ENCODE measurements at regions of chr9 and their contacts with region 1.

Region 1: DNA sequence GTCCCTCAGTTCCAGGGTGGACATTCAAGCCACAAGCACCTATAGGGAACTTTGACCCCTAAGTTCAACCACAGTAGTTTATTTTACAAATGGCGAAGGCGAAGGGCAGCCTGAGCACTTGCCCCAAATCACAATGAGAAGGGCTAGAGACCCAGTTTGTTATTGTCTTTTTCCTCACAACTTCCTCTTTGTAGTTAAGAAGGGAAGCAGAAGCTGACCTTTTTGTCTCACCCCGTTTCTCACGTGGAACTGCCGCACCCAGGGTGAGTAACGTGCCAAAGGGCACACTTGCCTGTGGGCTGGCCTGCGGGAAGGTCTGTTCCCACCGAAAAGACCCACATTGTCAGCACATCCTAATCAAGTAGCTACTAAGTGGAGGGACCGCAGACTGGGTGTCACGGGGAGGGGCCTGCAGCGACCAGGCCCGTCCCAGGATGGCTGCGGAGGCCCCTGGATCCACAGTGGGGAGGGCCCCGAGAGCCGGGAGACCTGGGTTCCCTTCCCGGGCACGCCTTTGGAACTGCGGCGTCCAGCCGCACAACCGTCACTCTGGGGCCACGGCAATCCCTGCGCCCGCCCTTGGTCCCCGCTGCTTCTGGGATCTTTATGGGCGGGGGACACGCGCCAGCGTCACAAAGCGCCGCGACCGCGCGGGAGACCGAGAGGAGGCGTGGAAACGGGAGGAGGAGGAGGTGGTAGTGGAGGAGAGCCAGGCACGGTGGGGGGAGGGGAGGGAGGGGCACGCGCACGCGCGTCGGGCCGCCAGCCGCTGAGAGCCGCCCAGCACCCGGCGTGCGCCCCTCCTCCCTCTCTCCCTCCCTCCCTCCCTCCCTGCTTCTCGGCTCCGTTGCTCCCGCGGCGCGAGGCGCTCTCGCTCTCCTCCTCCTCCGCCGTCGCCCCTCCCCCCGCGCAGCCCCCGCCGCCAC is at the start of gene UBE2R2:
- DNase-seq: peak; percentile 86 to 98 (median 91)
- ATAC-seq: peak; percentile 79
- H3K4me3 ChIP-seq: peak within 1 kb of the TSS; percentile 85 to 93
- H3K4me3 Mint-ChIP-seq: peak within 1 kb of the TSS; percentile 89
- H3K27ac ChIP-seq: peak within 1 kb of the TSS; percentile 92 to 94
- H3K27ac Mint-ChIP-seq: peak within 1 kb of the TSS; percentile 98
- H3K4me1 ChIP-seq: peaks cover 23% of the 10 kb centered on the region
- H3K4me1 Mint-ChIP-seq: peaks cover 50% of the 10 kb centered on the region
- H3K27me3 ChIP-seq: no peaks in the 10 kb centered on the region
- H3K27me3 Mint-ChIP-seq: no peaks in the 10 kb centered on the region
- CTCF ChIP-seq: no peak
- total RNA-seq, gene UBE2R2: 20.0 to 20.1 TPM

Region 2: DNA sequence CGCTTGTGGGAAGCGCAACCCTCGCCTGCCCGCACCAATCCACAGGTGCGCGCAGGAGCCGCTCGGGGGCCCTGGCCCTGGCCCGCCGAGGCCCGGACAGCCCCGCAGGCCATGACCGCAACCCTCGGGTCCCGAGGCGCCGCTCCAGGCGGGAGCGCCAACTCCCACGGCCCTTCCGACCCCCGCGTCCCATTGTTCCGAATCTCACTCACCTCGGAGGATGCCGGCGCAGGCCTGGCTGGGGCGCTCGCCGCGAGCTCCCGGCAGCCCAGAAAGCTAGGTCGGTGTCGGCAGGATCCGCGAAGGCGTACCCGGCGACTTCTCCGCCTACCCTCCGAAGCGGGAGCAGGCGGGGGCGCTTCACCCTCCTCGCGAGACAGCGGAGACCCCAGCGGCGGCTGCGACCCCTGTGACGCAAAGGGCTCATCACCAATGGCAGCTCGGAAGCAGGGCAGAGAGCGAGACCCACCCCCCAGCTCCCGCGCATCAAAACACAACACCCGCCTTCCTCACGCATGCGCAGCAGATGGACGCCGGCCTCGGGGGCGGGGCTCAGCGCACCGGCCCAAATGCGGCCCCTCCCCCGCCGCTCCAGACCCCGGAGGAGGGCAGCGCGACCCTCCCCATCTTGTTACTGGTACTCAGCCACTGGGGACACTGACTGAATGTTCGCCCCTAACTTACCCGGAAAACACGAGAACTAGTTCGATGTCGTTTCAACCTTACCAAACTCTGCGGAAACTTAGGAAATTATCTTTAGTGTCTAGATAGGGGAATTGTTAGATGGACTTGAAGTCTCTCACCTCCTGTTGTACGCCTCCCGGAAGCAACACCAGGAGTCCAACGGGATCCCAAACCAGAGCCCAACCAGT is 1265.8 kb before region 1 on chr9:
- CTCF ChIA-PET with region 1: no interaction called
- POLR2A ChIA-PET with region 1: no interaction called
- intact Hi-C with region 1: loop called in 1 of 2 experiments (anchors 5 kb)
- DNase-seq: peak; percentile 90 to 99 (median 96)
- ATAC-seq: peak; percentile 85
- H3K4me3 ChIP-seq: peak overlapping the region; percentile 85 to 87
- H3K4me3 Mint-ChIP-seq: peak overlapping the region; percentile 94
- H3K27ac ChIP-seq: peak overlapping the region; percentile 91 to 97
- H3K27ac Mint-ChIP-seq: peak overlapping the region; percentile 99
- H3K4me1 ChIP-seq: peaks cover 23% of the 10 kb centered on the region
- H3K4me1 Mint-ChIP-seq: peaks cover 57% of the 10 kb centered on the region
- H3K27me3 ChIP-seq: no peaks in the 10 kb centered on the region
- H3K27me3 Mint-ChIP-seq: no peaks in the 10 kb centered on the region
- CTCF ChIP-seq: peak; percentile 19

Region 3: GRCh38 chr9:33852216-33852826 is 35.7 kb after region 1 on chr9:
- CTCF ChIA-PET with region 1: interaction called, 73 read pairs
- POLR2A ChIA-PET with region 1: interaction called, 4 read pairs
- intact Hi-C with region 1: loop called (anchors 1 kb)
- DNase-seq: peak; percentile 22 to 76 (median 61)
- ATAC-seq: peak; percentile 68
- H3K4me3 ChIP-seq: no peak overlapping the region
- H3K4me3 Mint-ChIP-seq: no peak overlapping the region
- H3K27ac ChIP-seq: no peak overlapping the region
- H3K27ac Mint-ChIP-seq: peak overlapping the region; percentile 53
- H3K4me1 ChIP-seq: peaks cover 7% of the 10 kb centered on the region
- H3K4me1 Mint-ChIP-seq: peaks cover 51% of the 10 kb centered on the region
- H3K27me3 ChIP-seq: no peaks in the 10 kb centered on the region
- H3K27me3 Mint-ChIP-seq: no peaks in the 10 kb centered on the region
- CTCF ChIP-seq: peak; percentile 60

Region 4: DNA sequence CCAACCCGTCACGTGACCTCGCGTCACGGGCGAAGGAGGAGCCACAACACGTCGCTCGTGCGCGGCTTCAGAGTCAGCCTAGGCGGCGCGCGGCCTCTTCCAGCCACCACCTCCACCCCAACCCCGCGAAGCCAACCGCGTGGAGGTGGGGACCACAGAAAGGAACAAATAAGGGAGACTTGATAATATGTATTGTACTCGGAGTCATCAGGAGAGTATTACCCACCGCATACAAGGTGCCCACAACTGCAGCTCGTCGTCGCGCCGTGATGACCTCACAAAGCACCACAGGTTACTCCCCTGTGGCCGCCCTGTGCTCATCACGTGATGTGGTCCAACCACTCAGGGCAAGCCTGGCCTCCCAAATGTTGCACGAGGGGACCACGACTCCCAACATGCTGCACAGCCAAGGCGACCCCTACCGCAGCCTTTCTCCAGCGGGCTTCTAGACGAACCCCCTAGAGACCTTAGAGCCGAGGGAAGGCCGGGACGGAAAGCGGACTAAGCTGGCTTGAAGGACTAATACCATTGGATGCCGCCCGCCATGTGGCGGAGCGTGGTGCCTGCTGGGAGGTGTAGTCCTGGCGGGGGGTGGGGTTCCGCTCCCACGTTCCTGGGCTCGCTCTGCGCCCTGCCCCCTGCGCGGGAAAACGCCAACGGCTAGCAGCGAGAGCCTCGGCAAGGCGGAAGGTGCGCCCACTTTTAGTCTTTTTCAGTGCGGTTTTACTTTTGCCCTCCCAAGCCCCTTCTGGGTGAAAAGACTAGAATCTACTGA is 232.5 kb after region 1 on chr9:
- CTCF ChIA-PET with region 1: no interaction called
- POLR2A ChIA-PET with region 1: no interaction called
- intact Hi-C with region 1: loop called (anchors 1 to 2 kb)
- DNase-seq: peak; percentile 92 to 99 (median 97)
- ATAC-seq: peak; percentile 81
- H3K4me3 ChIP-seq: peak overlapping the region; percentile 76 to 79
- H3K4me3 Mint-ChIP-seq: peak overlapping the region; percentile 97
- H3K27ac ChIP-seq: peak overlapping the region; percentile 87 to 95
- H3K27ac Mint-ChIP-seq: peak overlapping the region; percentile 100
- H3K4me1 ChIP-seq: peaks cover 23% of the 10 kb centered on the region
- H3K4me1 Mint-ChIP-seq: peaks cover 29% of the 10 kb centered on the region
- H3K27me3 ChIP-seq: no peaks in the 10 kb centered on the region
- H3K27me3 Mint-ChIP-seq: no peaks in the 10 kb centered on the region
- CTCF ChIP-seq: no peak

Region 5: DNA sequence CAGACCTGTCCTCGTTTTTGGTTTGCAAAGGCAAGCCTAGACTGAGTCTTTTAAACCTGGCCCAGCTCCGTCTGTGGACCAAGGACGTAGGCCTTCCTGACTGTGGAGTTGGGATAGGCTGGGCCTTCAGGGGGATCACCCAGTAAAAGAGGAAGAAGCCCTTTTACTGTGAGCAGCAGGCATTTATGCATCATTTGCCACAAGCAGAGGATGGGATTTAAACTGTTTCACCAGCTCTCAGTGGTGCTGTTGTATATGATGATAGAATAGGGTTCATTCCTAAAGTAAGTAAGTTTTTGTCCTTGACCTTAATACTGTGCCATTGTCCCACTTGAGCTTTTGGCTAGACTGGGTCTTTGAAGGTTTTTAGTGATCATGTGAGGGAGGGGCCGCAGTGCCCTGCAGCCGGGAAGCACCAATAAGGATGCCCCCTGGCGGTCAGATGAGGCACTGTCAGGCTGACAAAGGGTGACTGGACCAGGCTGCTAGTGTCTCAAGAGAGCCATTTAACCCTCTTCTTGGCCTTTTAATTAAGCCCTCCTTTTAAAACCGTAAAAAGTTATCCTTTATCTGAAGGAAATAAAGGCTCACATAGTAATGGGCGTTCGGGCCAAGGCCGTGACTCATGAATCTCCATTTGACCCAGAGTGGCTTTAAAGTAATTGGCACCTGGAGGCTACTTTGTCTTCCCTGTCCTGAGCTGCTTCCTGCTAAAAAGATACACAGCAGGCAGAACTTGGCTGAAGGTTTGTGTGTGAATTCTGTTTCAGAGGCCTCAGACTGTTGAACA is 436.3 kb after region 1 on chr9:
- CTCF ChIA-PET with region 1: interaction called, 3 read pairs
- POLR2A ChIA-PET with region 1: no interaction called
- intact Hi-C with region 1: loop called in 1 of 2 experiments (anchors 5 kb)
- DNase-seq: peak in 8 of 9 experiments; percentile 29 to 79 (median 66)
- ATAC-seq: peak; percentile 75
- H3K4me3 ChIP-seq: no peak overlapping the region
- H3K4me3 Mint-ChIP-seq: no peak overlapping the region
- H3K27ac ChIP-seq: no peak overlapping the region
- H3K27ac Mint-ChIP-seq: peak overlapping the region; percentile 52
- H3K4me1 ChIP-seq: peaks cover 23% of the 10 kb centered on the region
- H3K4me1 Mint-ChIP-seq: peaks cover 21% of the 10 kb centered on the region
- H3K27me3 ChIP-seq: no peaks in the 10 kb centered on the region
- H3K27me3 Mint-ChIP-seq: no peaks in the 10 kb centered on the region
- CTCF ChIP-seq: peak; percentile 92

Region 6: DNA sequence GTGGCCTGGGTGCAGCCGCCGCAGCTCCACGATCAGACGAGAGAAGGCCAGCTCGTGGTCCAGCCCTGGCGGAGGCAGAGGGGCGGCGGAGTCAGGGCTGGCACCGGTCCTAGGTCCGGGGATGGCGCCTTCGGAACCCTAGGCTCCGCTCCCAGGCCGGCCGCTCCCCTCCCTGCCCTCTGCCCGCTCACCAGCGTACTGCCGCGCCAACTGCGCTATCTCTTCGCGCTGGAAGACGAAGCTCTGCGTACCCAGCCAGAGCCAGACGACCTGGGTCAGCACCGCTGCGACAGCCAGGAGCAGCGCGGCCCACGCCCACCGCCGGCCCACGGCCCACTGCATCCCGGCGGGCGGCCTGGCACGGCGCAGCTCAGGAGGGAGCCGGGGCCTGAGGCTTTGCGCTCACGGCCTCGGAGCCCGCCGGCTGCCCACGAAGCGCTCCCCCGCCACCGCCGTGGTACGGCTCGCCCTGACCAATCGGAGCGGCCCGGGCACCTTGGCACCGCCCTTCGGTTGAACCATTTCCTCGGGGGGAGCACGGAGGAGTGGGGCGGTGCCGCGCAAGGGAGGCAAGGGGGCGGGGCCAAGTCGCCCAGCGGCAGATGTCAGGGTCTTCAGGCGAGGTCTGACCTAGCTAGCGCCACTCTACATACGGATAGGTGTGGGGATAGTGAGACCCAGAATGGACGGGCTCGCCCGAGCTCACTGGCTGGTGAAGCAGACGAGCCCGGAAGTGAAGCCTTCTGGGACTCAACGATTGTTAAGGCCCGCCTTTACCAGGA is 821.0 kb after region 1 on chr9 and contains the start of gene SIGMAR1:
- CTCF ChIA-PET with region 1: no interaction called
- POLR2A ChIA-PET with region 1: no interaction called
- intact Hi-C with region 1: loop called in 1 of 2 experiments (anchors 5 kb)
- DNase-seq: peak; percentile 85 to 96 (median 93)
- ATAC-seq: peak; percentile 95
- H3K4me3 ChIP-seq: peak within 1 kb of the TSS; percentile 63 to 69
- H3K4me3 Mint-ChIP-seq: peak within 1 kb of the TSS; percentile 86
- H3K27ac ChIP-seq: peak within 1 kb of the TSS; percentile 55 to 86
- H3K27ac Mint-ChIP-seq: peak within 1 kb of the TSS; percentile 86
- H3K4me1 ChIP-seq: peaks cover 15% of the 10 kb centered on the region
- H3K4me1 Mint-ChIP-seq: peaks cover 36% of the 10 kb centered on the region
- H3K27me3 ChIP-seq: no peaks in the 10 kb centered on the region
- H3K27me3 Mint-ChIP-seq: no peaks in the 10 kb centered on the region
- CTCF ChIP-seq: no peak
- total RNA-seq, gene SIGMAR1: 8.5 to 9.6 TPM

Measured in CD8-positive, alpha-beta T cell (primary cell).